Naive thymus-derived CD8-positive, alpha-beta T cell (primary cell): ENCODE measurements at regions of chr14 and their contacts with region 1.

Region 1: GRCh38 chr14:60164712-60165546 is at the start of gene DHRS7:
- DNase-seq: peak; percentile 32 to 78 (median 58)
- ATAC-seq: peak; percentile 78 to 80
- H3K4me3 Mint-ChIP-seq: peak within 1 kb of the TSS; percentile 95 to 100 (median 98)
- H3K27ac Mint-ChIP-seq: peak within 1 kb of the TSS; percentile 98 to 100 (median 99)
- H3K4me1 Mint-ChIP-seq: peaks cover 14 to 54% (median 53%) of the 10 kb centered on the region in 4 donors
- H3K27me3 Mint-ChIP-seq: no peaks in the 10 kb centered on the region
- polyA plus RNA-seq, gene DHRS7: 163 to 212 (median 167) TPM

Region 2: DNA sequence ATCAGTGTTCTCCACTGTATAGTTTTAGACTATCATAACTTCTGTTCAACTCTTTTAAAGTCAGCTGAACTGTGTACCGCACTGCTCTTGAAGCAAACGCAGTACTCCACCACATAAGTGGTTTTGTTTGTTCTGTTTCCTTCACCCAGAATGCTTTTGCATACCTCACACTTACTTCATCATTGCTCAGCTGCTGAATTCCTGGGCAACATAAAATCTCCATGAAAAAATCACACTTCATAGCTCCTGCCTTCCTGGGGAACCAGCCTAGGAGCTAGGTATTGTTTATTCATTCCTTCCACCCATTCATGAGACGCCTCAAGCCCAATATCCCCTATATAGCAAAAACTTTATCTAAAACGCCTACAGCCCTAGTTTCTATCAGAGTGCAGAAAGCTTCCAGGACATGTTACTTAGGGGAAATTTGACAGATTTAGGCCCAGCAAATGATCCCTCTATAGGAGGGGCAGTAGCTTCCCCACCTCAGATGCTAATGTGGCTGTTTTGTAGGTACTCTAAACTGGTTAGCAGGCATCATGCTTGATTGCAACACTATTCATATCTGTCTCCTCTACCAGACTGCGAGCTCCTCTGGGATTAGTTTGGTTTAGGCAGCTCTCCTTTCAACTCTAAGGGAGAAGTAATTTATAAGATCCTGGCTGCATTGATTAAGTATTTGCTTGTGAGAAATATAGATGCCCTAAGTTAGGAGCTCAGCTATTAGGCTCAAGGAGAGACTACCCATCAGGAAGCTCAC is 200.5 kb before region 1 on chr14:
- POLR2A ChIA-PET with region 1: interaction called, 14 read pairs
- DNase-seq: peak in 4 of 10 donors; percentile 12 to 51 (median 28)
- ATAC-seq: peak; percentile 61 to 69
- H3K4me3 Mint-ChIP-seq: peak overlapping the region; percentile 86 to 99 (median 88)
- H3K27ac Mint-ChIP-seq: peak overlapping the region; percentile 89 to 98 (median 95)
- H3K4me1 Mint-ChIP-seq: peaks cover 12 to 19% (median 14%) of the 10 kb centered on the region in 4 donors
- H3K27me3 Mint-ChIP-seq: peaks cover 0 to 2% (median 0%) of the 10 kb centered on the region in 5 donors

Region 3: DNA sequence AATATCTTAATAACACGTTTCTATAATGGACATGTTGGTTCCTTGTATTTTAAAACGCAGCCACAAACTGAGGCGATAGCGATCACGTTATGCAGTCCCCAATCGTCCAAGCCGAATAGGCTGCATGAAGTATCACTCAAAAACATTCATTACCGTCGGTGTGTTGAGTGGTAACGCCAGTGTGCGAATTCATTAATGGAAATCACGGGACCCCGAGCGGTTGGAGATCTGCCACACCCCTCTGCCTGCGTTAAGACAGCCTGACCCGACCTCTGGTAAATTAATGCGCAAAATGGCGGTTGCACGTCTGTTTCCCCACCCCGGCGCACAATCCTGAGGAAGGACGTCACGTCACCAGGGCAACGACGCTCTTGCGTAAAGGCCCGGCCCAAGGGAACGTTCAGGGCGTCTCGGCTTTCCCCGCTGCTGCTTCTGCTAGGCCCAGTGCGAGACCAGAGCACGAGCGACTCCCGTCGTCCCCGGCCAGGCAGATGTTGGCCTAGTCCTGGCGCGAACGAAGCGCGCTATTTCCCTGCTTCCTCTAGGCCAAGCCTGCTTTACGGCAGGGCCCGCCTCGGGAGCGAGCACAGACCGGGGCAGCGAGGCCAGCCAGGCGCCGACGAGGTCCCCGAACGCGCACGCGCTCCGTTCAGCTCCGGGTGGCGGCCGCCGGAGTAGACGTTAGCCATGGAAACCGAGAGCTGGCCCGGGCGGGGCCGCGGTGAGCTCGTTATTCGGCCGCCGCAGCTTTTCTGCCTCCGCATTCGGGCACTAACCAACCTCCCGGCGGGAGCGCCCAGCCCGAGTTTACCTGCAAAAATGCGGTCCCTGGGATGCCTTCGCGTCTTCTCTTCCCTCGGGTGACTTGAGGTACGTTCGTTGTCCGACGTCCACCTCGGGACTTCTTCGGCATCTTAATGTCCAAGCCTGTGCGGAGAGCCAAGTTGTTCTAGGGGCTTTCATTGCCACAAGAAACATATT is 73.1 kb before region 1 on chr14 and contains the start of gene PCNX4:
- POLR2A ChIA-PET with region 1: interaction called, 12 read pairs
- DNase-seq: peak; percentile 81 to 98 (median 94)
- ATAC-seq: peak; percentile 89 to 91
- H3K4me3 Mint-ChIP-seq: peak within 1 kb of the TSS; percentile 86 to 96 (median 92)
- H3K27ac Mint-ChIP-seq: peak within 1 kb of the TSS; percentile 95 to 99 (median 99)
- H3K4me1 Mint-ChIP-seq: peaks cover 25 to 48% (median 44%) of the 10 kb centered on the region in 4 donors
- H3K27me3 Mint-ChIP-seq: no peaks in the 10 kb centered on the region
- polyA plus RNA-seq, gene PCNX4: 16.6 to 20.1 (median 17.6) TPM

Region 4: DNA sequence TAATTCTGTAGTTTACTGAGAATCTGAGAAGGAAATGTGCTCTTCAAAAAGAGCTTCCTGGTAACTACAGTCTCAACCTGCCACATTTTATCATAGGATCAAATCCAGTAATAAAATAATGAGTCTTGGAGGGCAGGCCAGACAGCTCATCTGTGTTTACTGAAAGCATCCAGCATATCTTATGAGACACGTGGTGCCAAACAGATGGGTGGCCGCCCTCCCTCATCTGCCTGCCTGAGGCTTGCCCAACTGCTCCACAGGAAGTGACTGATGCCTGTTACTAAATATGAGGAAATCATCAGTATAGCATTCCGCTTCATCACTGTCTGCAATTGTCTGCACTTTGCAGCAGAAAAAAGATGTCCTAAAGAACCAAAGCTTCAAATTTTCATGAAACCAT is 13.2 kb before region 1 on chr14:
- POLR2A ChIA-PET with region 1: interaction called, 27 read pairs
- DNase-seq: peak; percentile 37 to 78 (median 58)
- ATAC-seq: peak; percentile 98 to 100
- H3K4me3 Mint-ChIP-seq: peak overlapping the region in 9 of 10 donors; percentile 1 to 51 (median 26)
- H3K27ac Mint-ChIP-seq: peak overlapping the region; percentile 30 to 99 (median 92)
- H3K4me1 Mint-ChIP-seq: peaks cover 26 to 54% (median 51%) of the 10 kb centered on the region in 4 donors
- H3K27me3 Mint-ChIP-seq: no peaks in the 10 kb centered on the region

Region 5: DNA sequence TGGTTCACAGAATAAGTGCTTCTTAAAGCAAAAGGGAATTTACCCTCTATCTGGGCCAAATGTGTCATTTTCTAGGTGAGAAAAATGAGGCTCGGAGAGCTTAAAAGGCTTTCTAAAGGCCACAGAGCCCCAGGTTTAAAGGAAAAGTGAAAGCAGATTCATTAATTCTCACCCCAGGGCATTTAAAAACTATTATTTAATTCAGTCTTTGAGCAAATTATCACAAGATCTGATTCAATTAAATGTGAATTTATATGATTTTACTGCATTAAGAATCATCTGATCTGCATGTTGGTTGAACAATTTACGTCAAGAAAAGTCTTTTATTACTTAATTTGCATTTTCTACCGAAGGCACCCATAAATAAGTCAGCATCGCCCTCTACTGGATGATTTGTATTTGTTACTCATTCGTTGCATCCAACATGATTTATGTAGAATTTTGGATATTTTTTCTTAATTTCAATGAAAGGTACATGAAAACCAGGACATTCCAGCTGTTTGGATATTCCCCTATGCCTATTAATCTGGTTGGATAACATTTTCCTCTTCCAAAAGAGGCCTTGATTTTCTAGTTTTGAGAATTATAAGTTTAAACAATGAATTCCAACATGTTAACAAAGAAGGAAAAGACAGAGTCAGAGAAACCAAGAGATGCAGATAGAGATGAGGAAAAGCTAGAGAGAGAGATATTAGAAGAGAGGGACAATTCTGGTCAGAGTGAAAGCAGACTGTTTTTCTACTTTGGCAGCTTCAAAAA is 19.4 kb after region 1 on chr14:
- POLR2A ChIA-PET with region 1: interaction called, 16 read pairs
- DNase-seq: peak in 7 of 10 donors; percentile 23 to 81 (median 68)
- ATAC-seq: peak; percentile 81 to 82
- H3K4me3 Mint-ChIP-seq: peak overlapping the region; percentile 71 to 88 (median 83)
- H3K27ac Mint-ChIP-seq: peak overlapping the region; percentile 41 to 93 (median 91)
- H3K4me1 Mint-ChIP-seq: peaks cover 4 to 15% (median 11%) of the 10 kb centered on the region in 4 donors
- H3K27me3 Mint-ChIP-seq: no peaks in the 10 kb centered on the region